ENCODE measurements at regions of chr20 and their contacts with region 1.

Region 1: GRCh38 chr20:53915446-53916172 is 154.8 kb downstream of the BCAS1 start:
- DNase-seq: peak; percentile 79 to 96 (median 90)
- ATAC-seq: peak; percentile 95 to 98
- H3K4me3 Mint-ChIP-seq: peak overlapping the region; percentile 93 to 98 (median 96)
- H3K27ac Mint-ChIP-seq: peak overlapping the region; percentile 90 to 95 (median 94)
- H3K4me1 Mint-ChIP-seq: peaks cover 23 to 42% (median 31%) of the 10 kb centered on the region in 4 donors
- H3K27me3 Mint-ChIP-seq: no peaks in the 10 kb centered on the region

Region 2: GRCh38 chr20:53578492-53579222 is 337.0 kb before region 1 on chr20:
- POLR2A ChIA-PET with region 1: interaction called, 12 read pairs
- DNase-seq: peak in 9 of 10 donors; percentile 51 to 89 (median 74)
- ATAC-seq: peak; percentile 33 to 49
- H3K4me3 Mint-ChIP-seq: peak overlapping the region; percentile 79 to 94 (median 92)
- H3K27ac Mint-ChIP-seq: peak overlapping the region; percentile 91 to 99 (median 96)
- H3K4me1 Mint-ChIP-seq: peaks cover 31 to 94% (median 82%) of the 10 kb centered on the region in 4 donors
- H3K27me3 Mint-ChIP-seq: no peaks in the 10 kb centered on the region

Region 3: GRCh38 chr20:53934421-53935343 is 19.1 kb after region 1 on chr20:
- POLR2A ChIA-PET with region 1: interaction called, 10 read pairs
- DNase-seq: peak in 3 of 10 donors; percentile 24 to 31 (median 28)
- ATAC-seq: peak; percentile 69 to 73
- H3K4me3 Mint-ChIP-seq: peak overlapping the region; percentile 38 to 80 (median 74)
- H3K27ac Mint-ChIP-seq: peak overlapping the region; percentile 41 to 94 (median 78)
- H3K4me1 Mint-ChIP-seq: peaks cover 30 to 80% (median 47%) of the 10 kb centered on the region in 4 donors
- H3K27me3 Mint-ChIP-seq: no peaks in the 10 kb centered on the region